ENCODE measurements at regions of chr9 and their contacts with region 1.

Region 1: DNA sequence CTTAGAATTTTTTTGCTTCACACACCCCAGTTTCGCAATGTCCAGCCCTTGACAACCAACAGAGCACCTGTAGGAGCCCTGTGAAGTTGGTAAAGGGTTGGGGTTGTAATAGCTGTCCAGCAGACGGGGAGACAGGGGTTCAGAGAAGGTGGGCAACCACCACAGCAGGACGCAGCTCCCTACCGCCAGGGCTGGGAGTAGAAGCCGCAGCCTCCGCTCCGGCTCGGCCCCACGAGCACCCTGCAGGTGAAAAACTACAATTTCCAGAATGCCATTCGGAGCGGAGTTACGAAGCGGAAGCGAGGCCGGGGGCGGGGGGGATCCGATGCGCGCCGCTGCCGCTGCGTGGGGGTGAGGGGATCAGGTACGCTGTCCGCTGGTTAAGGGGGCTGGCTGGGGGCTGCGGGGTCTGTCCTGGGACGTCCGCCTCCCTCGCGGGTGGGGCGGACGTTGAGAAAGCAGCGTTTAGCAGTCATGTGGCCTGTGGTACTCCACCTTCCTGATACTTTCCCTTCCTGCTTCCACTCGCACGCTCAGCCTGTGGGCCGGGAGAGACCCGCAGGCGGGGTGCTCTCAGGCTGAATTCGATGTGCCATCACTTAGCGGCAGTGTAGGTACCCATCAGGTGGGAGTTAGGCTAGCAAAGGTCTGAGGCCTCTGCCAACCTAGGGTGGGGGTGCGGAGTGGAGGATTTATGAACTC is at the start of gene TRMT10B:
- DNase-seq: peak; percentile 82
- H3K4me3 ChIP-seq: peak within 1 kb of the TSS; percentile 66 to 96 (median 92)
- H3K27ac ChIP-seq: peak within 1 kb of the TSS; percentile 69
- H3K4me1 ChIP-seq: peaks cover 10% of the 10 kb centered on the region
- H3K27me3 ChIP-seq: peaks cover 0 to 6% of the 10 kb centered on the region in 2 experiments
- CTCF ChIP-seq: peak in 1 of 2 donors; percentile 6
- POLR2A ChIP-seq: peak; percentile 65
- total RNA-seq, gene TRMT10B: 5.2 and 7.0 TPM in 2 replicates

Region 2: GRCh38 chr9:37582548-37583157 is 171.0 kb before region 1 on chr9:
- CTCF ChIA-PET with region 1: no interaction called
- POLR2A ChIA-PET with region 1: no interaction called
- dilution Hi-C with region 1: no loop called
- intact Hi-C with region 1: loop called (anchors 5 kb)
- DNase-seq: peak; percentile 75
- H3K4me3 ChIP-seq: no peak overlapping the region
- H3K27ac ChIP-seq: no peak overlapping the region
- H3K4me1 ChIP-seq: no peaks in the 10 kb centered on the region
- H3K27me3 ChIP-seq: no peaks in the 10 kb centered on the region
- CTCF ChIP-seq: peak; percentile 36 to 46
- POLR2A ChIP-seq: no peak

Region 3: DNA sequence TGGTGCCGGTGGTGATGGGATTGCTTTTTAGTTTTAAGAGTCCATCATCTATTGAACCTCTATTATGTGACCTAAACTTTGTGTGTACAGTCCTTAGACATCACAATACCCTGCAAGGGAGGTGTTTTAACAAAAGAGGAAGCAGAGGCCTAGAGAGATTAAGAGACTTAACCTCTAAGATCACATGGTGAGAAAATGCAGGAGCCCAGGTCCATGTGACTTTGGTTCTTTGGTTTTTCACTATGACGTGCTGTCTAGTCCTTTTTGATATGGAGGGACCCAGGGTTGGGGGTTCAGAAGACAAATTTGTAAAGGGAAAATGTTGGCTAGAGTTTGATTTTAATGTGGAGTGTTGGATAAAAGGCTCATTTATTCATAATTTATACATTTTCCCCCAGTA is 34.1 kb before region 1 on chr9:
- CTCF ChIA-PET with region 1: no interaction called
- POLR2A ChIA-PET with region 1: no interaction called
- dilution Hi-C with region 1: no loop called
- intact Hi-C with region 1: no loop called
- DNase-seq: no peak
- H3K4me3 ChIP-seq: no peak overlapping the region
- H3K27ac ChIP-seq: no peak overlapping the region
- H3K4me1 ChIP-seq: no peaks in the 10 kb centered on the region
- H3K27me3 ChIP-seq: peaks cover 4 to 8% of the 10 kb centered on the region in 2 experiments
- CTCF ChIP-seq: no peak
- POLR2A ChIP-seq: no peak

Region 4: GRCh38 chr9:38047301-38048251 is 293.9 kb after region 1 on chr9:
- CTCF ChIA-PET with region 1: no interaction called
- POLR2A ChIA-PET with region 1: no interaction called
- dilution Hi-C with region 1: no loop called
- intact Hi-C with region 1: no loop called
- DNase-seq: peak; percentile 90
- H3K4me3 ChIP-seq: peak overlapping the region in 1 of 3 experiments; percentile 38
- H3K27ac ChIP-seq: peak overlapping the region; percentile 96
- H3K4me1 ChIP-seq: peaks cover 30% of the 10 kb centered on the region
- H3K27me3 ChIP-seq: no peaks in the 10 kb centered on the region
- CTCF ChIP-seq: no peak
- POLR2A ChIP-seq: peak; percentile 34

Region 5: GRCh38 chr9:38172585-38172984 is 418.9 kb after region 1 on chr9:
- CTCF ChIA-PET with region 1: no interaction called
- POLR2A ChIA-PET with region 1: no interaction called
- dilution Hi-C with region 1: no loop called
- intact Hi-C with region 1: no loop called
- DNase-seq: no peak
- H3K4me3 ChIP-seq: no peak overlapping the region
- H3K27ac ChIP-seq: no peak overlapping the region
- H3K4me1 ChIP-seq: peaks cover 4% of the 10 kb centered on the region
- H3K27me3 ChIP-seq: no peaks in the 10 kb centered on the region
- CTCF ChIP-seq: no peak
- POLR2A ChIP-seq: no peak

Measured in endothelial cell of umbilical vein (primary cell).